ENCODE measurements at regions of chr10 and their contacts with region 1.

Region 1: DNA sequence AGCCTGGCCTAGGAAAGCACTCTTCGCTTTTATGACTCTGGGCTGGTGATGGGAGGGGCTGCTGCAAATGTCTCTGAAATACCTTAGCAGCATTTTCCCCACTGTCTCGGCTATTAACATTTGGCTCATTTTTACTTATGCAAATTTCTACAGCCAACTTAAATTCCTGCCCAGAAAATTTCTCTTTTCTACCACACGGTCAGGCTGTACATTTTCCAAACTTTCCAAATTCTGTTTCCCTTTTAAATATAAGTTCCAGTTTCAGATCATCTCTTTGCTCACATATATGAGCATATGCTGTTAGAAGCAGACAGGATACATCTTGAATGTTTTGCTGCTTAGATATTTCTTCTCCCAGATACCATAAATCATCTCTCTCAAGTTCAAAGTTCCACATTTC is 332.3 kb downstream of the ADK start:
- DNase-seq: no peak
- ATAC-seq: no peak
- H3K4me3 ChIP-seq: no peak overlapping the region
- H3K27ac ChIP-seq: no peak overlapping the region
- H3K4me1 ChIP-seq: no peaks in the 10 kb centered on the region
- H3K27me3 ChIP-seq: no peaks in the 10 kb centered on the region
- CTCF ChIP-seq: no peak

Region 2: DNA sequence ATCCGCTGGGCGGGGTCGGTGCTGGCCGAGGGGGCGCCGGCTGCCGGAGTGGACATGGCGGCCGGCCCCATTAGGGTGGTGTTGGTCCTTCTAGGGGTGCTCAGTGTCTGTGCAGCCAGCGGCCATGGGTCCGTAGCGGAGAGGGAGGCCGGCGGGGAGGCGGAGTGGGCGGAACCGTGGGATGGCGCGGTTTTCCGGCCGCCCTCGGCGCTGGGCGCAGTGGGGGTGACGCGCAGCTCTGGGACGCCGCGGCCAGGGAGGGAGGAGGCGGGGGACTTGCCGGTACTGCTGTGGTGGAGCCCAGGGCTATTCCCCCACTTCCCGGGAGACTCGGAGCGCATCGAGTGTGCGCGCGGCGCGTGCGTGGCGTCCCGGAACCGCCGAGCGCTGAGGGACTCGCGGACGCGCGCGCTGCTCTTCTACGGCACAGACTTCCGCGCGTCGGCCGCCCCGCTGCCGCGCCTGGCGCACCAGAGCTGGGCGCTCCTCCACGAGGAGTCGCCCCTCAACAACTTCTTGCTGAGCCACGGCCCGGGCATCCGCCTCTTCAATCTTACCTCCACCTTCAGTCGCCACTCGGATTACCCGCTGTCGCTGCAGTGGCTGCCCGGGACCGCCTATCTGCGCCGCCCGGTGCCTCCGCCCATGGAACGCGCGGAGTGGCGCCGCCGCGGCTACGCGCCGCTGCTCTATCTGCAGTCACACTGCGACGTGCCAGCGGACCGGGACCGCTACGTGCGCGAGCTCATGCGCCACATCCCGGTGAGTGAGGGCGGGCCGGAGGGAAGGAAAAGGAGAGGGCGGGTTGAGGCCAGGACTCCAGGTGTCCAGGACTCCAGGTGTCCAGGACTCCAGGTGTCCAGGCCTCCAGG is 710.8 kb before region 1 on chr10:
- intact Hi-C with region 1: no loop called
- DNase-seq: peak; percentile 81 to 95 (median 88)
- ATAC-seq: peak; percentile 77 to 84 (median 80)
- H3K4me3 ChIP-seq: peak overlapping the region; percentile 44 to 91 (median 80)
- H3K27ac ChIP-seq: peak overlapping the region; percentile 87 to 99 (median 93)
- H3K4me1 ChIP-seq: peaks cover 0 to 21% (median 8%) of the 10 kb centered on the region in 3 donors
- H3K27me3 ChIP-seq: no peaks in the 10 kb centered on the region
- CTCF ChIP-seq: no peak

Region 3: DNA sequence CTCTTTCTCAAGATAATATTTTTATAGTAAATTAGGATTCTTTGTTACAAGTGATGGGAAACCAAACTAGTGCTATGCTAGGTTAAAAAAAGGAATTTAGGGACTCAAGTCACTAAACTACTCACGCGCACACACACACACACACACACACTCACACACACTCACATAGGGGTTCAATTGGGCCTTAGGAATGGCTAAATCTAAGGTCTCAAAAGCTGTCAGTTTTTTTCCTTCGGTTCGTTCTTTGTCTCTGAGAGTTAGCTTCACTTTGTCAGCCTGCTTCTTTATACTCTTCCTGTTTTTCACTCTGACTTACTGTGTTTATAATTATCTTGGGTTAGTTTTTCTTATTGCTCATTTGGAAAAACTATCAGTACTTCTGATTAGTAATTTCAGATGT is 193.4 kb before region 1 on chr10:
- intact Hi-C with region 1: loop called in 1 of 3 experiments (anchors 5 kb)
- DNase-seq: no peak
- ATAC-seq: no peak
- H3K4me3 ChIP-seq: no peak overlapping the region
- H3K27ac ChIP-seq: no peak overlapping the region
- H3K4me1 ChIP-seq: peaks cover 0 to 8% (median 7%) of the 10 kb centered on the region in 3 donors
- H3K27me3 ChIP-seq: no peaks in the 10 kb centered on the region
- CTCF ChIP-seq: no peak

Region 4: DNA sequence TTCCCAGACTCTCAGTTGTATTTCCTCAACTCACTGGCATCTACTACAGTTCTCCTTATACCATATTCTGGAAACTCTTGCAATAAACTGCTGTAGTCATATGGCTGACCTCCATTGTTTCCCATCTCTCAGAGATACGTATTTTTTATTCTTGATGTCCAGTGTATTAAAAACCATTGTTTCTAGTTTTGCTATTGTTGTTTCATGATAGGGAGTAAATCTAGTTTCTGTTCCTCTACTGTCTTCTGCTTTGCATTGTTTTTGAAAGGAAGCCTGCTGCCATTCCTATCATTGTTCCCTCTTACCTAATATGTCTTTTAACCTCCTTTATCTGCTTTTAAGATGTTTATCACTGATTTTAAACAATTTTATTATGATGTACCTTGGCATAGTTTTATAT is 77.3 kb before region 1 on chr10:
- intact Hi-C with region 1: no loop called
- DNase-seq: no peak
- ATAC-seq: no peak
- H3K4me3 ChIP-seq: no peak overlapping the region
- H3K27ac ChIP-seq: no peak overlapping the region
- H3K4me1 ChIP-seq: no peaks in the 10 kb centered on the region
- H3K27me3 ChIP-seq: no peaks in the 10 kb centered on the region
- CTCF ChIP-seq: no peak